WTC11 (cell line): ENCODE measurements at regions of chr4 and their contacts with region 1.

Region 1: DNA sequence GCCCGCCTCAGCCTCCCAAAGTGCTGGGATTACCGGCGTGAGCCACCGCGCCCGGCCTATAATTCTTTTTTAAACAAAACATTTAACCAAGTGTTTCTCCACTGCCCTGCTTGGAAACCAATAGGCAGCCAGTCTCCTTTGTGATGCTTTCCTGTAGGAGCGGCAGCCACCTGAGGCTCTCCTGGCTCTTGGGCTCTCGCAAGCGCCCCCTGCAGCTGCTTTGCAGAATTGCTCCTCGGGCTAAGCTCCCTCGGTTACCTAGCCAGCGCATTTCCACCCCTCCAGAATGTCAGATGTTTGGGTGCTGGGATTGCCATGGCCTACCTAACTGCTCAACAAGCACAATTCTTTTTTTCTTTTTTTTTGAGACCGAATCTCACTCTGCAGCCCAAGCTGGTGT is 7.7 kb downstream of the S100P start:
- DNase-seq: peak; percentile 86
- ATAC-seq: peak; percentile 100
- H3K4me3 Mint-ChIP-seq: no peak overlapping the region
- H3K27ac Mint-ChIP-seq: no peak overlapping the region
- H3K4me1 Mint-ChIP-seq: no peaks in the 10 kb centered on the region
- H3K27me3 Mint-ChIP-seq: no peaks in the 10 kb centered on the region
- CTCF ChIP-seq: peak; percentile 86

Region 2: DNA sequence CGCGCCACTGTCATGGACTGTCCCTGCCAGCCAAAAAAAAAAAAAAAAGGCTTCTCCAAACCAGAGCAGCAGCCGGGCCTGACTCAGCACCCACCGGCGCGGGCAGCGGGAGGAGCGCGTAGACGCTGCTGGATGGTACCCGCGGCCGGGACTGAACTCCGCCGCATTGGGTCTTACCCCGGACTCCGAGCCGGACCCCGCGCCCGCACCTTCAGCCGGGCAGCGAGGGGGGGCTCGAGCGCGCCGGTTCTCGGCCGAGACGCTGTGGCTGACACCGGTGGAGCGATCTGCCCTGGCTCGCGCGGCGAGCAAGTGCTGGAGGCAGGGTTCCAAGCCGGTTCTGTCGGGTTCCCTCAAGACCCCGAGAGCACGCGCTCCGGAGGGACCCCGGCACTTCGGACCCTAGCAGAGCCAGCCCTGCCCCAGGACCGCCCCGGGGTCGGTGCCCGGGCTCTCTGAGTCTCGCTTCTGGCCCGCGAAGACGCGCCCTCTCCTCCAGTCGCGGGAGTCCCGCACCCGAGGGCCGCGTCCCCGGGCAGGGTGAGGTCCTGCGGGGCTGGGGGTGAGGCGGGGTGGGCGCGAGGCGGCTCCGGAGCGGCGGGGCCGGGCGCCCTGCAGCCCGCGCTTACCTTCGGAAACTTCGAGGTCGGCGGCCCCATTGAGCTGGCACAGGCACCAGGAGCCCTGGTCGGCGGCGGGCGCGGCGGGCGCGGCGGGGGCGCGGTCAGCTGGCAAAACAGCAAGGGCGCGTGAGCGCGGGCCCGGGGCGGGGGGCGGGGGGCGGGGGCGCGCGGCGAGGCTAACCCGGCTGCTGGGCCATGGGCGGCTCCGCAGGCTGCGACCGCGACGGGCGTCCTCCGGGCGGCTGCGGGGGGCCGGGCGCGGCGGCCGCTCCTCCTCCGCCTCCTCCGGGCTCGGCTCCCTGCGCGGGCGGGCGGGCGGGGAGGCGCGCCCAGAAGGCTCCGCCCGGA is 138.2 kb before region 1 on chr4:
- CTCF ChIA-PET with region 1: no interaction called
- POLR2A ChIA-PET with region 1: no interaction called
- DNase-seq: peak; percentile 42
- ATAC-seq: peak; percentile 60
- H3K4me3 Mint-ChIP-seq: peak overlapping the region; percentile 54
- H3K27ac Mint-ChIP-seq: no peak overlapping the region
- H3K4me1 Mint-ChIP-seq: peaks cover 2% of the 10 kb centered on the region; the same call in 1 of the 2 replicates
- H3K27me3 Mint-ChIP-seq: peaks cover 91% of the 10 kb centered on the region
- CTCF ChIP-seq: no peak

Region 3: GRCh38 chr4:6584865-6585264 is 116.5 kb before region 1 on chr4:
- CTCF ChIA-PET with region 1: no interaction called
- POLR2A ChIA-PET with region 1: no interaction called
- DNase-seq: no peak
- ATAC-seq: no peak
- H3K4me3 Mint-ChIP-seq: no peak overlapping the region
- H3K27ac Mint-ChIP-seq: no peak overlapping the region
- H3K4me1 Mint-ChIP-seq: no peaks in the 10 kb centered on the region
- H3K27me3 Mint-ChIP-seq: peaks cover 5% of the 10 kb centered on the region
- CTCF ChIP-seq: no peak

Region 4: DNA sequence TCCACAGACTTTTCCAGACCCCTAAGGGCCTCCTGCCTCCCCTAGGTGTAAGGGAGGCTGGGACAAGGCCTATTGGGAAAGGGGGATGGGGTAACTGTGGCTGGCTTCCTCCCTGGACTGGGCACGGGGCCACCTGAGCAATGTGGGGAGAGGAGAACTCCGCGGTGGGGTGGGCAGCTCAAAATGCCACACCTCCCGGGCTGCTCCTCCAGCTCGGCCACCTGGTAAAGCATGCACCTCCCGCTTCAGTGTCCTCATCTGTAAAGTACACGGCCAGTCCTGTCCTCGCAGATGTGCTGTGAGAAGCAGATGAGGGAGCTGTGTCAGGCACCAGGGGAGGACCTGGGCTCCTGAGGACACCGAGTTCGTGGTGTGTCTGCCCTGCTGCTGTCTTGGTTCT is 81.9 kb before region 1 on chr4:
- CTCF ChIA-PET with region 1: no interaction called
- POLR2A ChIA-PET with region 1: no interaction called
- DNase-seq: no peak
- ATAC-seq: no peak
- H3K4me3 Mint-ChIP-seq: no peak overlapping the region
- H3K27ac Mint-ChIP-seq: no peak overlapping the region
- H3K4me1 Mint-ChIP-seq: no peaks in the 10 kb centered on the region
- H3K27me3 Mint-ChIP-seq: no peaks in the 10 kb centered on the region
- CTCF ChIP-seq: no peak

Region 5: GRCh38 chr4:6663596-6664393 is 37.6 kb before region 1 on chr4:
- CTCF ChIA-PET with region 1: interaction called, 13 read pairs
- POLR2A ChIA-PET with region 1: no interaction called
- DNase-seq: peak; percentile 34
- ATAC-seq: peak; percentile 49
- H3K4me3 Mint-ChIP-seq: peak overlapping the region; percentile 45
- H3K27ac Mint-ChIP-seq: no peak overlapping the region
- H3K4me1 Mint-ChIP-seq: no peaks in the 10 kb centered on the region
- H3K27me3 Mint-ChIP-seq: peaks cover 57% of the 10 kb centered on the region
- CTCF ChIP-seq: no peak

Region 6: DNA sequence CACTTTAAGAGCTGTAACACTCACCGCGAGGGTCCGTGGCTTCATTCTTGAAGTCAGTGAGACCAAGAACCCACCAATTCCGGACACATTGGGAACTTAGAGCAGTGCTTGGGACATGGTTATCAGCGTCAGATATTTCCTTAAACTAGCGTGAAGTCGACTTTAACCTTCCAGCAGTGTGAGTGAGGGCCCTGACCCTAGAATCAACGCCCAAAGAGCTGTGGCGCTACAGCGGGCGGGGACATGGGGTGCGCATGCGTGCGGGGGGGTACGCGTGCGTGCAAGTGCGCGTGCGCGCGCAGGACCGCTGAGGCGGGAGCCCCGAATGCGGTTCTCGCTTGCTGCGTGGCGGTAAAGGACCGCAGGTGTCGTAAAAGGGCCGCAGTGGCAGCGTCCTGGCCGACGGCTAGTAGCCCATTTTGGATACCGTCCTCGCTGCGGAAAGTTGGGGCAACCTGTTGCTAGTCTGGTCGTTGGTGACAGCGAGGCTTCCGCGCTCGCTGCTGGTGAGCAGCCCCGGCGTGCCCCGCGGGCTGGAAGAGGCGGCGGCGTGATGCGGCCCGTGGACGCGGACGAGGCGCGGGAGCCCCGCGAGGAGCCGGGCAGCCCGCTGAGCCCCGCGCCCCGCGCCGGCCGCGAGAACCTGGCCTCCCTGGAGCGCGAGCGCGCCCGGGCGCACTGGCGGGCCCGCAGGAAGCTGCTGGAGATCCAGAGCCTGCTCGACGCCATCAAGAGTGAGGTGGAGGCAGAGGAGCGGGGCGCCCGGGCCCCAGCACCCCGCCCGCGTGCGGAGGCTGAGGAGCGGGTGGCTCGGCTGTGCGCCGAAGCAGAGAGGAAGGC is 27.5 kb before region 1 on chr4:
- CTCF ChIA-PET with region 1: interaction called, 13 read pairs
- POLR2A ChIA-PET with region 1: no interaction called
- DNase-seq: peak; percentile 95
- ATAC-seq: peak; percentile 84
- H3K4me3 Mint-ChIP-seq: peak overlapping the region; percentile 90
- H3K27ac Mint-ChIP-seq: peak overlapping the region; percentile 96
- H3K4me1 Mint-ChIP-seq: peaks cover 31% of the 10 kb centered on the region
- H3K27me3 Mint-ChIP-seq: peaks cover 28% of the 10 kb centered on the region
- CTCF ChIP-seq: no peak

Region 7: DNA sequence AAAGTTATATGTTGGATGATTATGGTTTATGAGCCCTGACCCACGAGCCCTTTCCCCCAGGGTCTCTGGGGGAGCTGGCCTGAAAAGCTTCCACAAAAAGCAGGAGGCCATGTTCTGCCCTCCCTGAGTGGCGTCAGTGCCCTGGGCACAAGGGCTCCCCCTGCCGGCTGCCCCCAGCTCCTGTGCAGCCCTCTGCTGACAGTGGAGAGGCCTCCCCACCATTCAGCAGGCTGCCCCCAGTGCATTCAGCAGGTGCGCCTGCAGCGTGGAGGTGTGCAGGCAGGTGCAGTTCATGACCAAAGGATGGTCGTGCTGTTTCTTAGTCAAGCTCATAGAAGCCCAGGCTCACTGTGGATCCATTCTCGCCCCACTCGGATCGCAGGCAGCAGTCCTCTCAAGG is 20.2 kb before region 1 on chr4:
- CTCF ChIA-PET with region 1: interaction called, 27 read pairs
- POLR2A ChIA-PET with region 1: no interaction called
- DNase-seq: peak; percentile 49
- ATAC-seq: peak; percentile 36
- H3K4me3 Mint-ChIP-seq: no peak overlapping the region
- H3K27ac Mint-ChIP-seq: no peak overlapping the region
- H3K4me1 Mint-ChIP-seq: peaks cover 11% of the 10 kb centered on the region
- H3K27me3 Mint-ChIP-seq: no peaks in the 10 kb centered on the region
- CTCF ChIP-seq: no peak; the same call in 1 of the 2 replicates

Region 8: DNA sequence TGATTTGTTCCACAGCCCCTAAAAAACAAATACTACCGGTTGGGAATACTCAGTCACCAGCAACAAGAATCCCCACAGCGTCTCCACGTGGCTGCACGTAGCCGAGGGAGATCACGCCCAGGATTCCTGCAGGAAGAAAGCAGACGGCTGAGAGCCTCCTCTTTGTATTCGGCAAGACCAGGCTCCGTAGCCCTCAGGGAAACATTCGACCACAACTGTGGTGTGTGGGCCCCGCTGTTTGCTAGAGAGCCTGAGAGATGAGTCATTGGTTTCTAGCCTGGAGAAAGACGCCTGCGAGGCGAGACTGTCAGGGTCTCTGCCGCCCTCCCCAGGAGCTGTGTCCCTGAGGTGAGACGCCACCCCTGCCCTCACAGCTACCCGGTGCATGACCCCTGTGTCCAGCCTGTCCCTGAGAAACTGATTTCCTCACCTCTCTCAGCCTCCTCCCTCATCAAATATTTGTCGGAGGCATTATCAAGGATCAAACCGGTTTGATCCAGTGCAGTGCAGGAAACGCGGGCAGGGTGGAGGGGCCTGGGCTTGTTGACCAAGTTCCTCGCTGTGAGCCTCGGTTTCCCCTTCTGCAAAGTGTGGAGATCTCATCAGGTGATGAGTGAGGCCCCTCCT is 12.4 kb before region 1 on chr4:
- CTCF ChIA-PET with region 1: interaction called, 56 read pairs
- POLR2A ChIA-PET with region 1: no interaction called
- DNase-seq: peak; percentile 38
- ATAC-seq: peak; percentile 41
- H3K4me3 Mint-ChIP-seq: no peak overlapping the region
- H3K27ac Mint-ChIP-seq: peak overlapping the region; percentile 77; the same call in 1 of the 2 replicates
- H3K4me1 Mint-ChIP-seq: peaks cover 27% of the 10 kb centered on the region
- H3K27me3 Mint-ChIP-seq: peaks cover 4% of the 10 kb centered on the region; the same call in 1 of the 2 replicates
- CTCF ChIP-seq: no peak

Region 9: DNA sequence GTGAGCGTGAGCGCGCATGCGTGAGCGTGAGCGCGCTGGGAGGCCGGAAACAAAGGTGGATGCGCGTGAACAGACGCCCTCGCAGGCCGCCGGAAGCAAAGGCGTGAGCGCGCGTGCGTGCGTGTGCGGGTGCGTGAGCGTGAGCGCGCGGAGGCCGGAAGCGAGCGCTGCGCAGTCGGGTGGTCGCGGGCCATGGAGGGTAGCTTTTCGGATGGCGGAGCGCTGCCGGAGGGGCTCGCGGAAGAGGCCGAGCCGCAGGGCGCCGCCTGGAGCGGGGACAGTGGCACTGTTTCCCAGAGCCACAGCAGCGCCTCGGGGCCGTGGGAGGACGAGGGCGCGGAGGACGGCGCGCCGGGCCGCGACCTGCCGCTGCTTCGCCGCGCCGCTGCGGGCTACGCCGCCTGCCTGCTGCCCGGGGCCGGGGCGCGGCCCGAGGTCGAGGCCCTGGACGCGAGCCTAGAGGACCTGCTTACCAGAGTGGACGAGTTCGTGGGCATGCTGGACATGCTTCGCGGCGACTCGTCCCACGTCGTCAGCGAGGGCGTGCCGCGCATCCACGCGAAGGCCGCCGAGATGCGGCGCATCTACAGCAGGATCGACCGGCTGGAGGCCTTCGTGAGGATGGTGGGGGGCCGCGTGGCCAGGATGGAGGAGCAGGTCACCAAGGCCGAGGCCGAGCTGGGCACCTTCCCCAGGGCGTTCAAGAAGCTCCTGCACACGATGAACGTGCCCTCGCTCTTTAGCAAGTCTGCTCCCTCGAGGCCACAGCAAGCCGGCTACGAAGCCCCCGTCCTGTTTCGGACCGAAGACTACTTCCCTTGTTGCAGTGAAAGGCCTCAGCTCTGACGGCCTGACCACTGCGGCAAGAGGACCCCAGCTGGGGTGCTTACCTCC is 14.9 kb after region 1 on chr4 and contains the start of gene BLOC1S4:
- CTCF ChIA-PET with region 1: interaction called, 17 read pairs
- POLR2A ChIA-PET with region 1: interaction called, 3 read pairs
- DNase-seq: peak; percentile 77
- ATAC-seq: peak; percentile 73
- H3K4me3 Mint-ChIP-seq: peak within 1 kb of the TSS; percentile 75
- H3K27ac Mint-ChIP-seq: peak within 1 kb of the TSS; percentile 96
- H3K4me1 Mint-ChIP-seq: peaks cover 8% of the 10 kb centered on the region
- H3K27me3 Mint-ChIP-seq: peaks cover 34% of the 10 kb centered on the region
- CTCF ChIP-seq: no peak
- total RNA-seq, gene BLOC1S4: 21.4 to 23.4 TPM (median 21.9 TPM) in 3 replicates

Region 10: DNA sequence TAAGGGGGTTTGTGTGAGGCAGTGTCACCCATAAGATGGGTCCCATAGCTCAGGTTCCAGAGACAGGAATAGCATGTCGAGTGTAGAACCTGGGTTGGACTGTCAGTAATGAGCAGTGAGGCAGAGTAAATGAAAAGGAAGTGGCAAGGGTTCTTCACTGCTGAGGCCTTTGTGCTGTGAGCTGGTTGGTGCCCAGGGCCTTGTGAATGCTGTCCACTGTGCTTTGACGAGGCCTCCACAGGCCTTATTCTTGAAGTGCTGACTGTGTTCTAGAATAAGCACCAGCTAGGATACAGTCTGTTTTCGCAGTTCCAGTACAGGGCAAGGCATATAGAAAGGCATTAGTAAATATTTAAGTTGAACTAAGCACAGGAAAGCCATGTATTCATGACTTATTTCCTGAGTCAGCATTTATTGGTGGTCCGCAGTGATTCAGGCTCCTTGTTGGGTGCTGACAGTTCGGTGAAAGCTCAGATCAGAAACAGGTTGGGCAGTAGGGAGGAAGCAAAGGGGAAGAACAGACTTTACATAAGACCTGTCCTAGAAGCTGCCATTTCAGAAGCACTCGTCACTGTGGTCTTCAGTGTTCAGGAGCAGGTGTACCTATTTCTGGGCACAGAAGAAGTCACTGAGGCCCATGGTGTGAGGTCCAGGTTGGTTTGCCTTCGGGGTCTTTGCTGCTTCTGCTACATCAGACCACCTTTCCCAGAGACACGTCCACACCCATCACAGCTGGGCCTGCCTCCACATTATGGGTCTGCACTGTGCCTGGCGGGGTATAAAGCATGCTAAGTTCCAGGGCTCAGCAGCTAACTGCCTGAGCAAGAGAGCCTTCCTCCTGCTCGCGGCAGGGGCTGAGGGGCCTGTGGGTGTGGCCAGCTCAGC is 316.3 kb after region 1 on chr4:
- CTCF ChIA-PET with region 1: no interaction called
- POLR2A ChIA-PET with region 1: no interaction called
- DNase-seq: no peak
- ATAC-seq: no peak
- H3K4me3 Mint-ChIP-seq: no peak overlapping the region
- H3K27ac Mint-ChIP-seq: peak overlapping the region; percentile 86; the same call in 1 of the 2 replicates
- H3K4me1 Mint-ChIP-seq: peaks cover 14% of the 10 kb centered on the region
- H3K27me3 Mint-ChIP-seq: no peaks in the 10 kb centered on the region
- CTCF ChIP-seq: no peak